Activated CD4-positive, alpha-beta T cell treated with anti-CD3 and anti-CD28 coated beads for 36 hours (primary cell): ENCODE measurements at regions of chr10 and their contacts with region 1.

Region 1: GRCh38 chr10:5446390-5446926 is 34.1 kb downstream of the NET1 start:
- DNase-seq: peak; percentile 86
- ATAC-seq: peak; percentile 71
- H3K4me3 Mint-ChIP-seq: peak overlapping the region; percentile 70
- H3K27ac Mint-ChIP-seq: peak overlapping the region; percentile 45
- H3K4me1 Mint-ChIP-seq: peaks cover 53% of the 10 kb centered on the region
- H3K27me3 Mint-ChIP-seq: no peaks in the 10 kb centered on the region

Region 2: GRCh38 chr10:4740471-4740870 is 706.0 kb before region 1 on chr10:
- CTCF ChIA-PET with region 1: no interaction called
- POLR2A ChIA-PET with region 1: no interaction called
- intact Hi-C with region 1: no loop called
- DNase-seq: no peak
- ATAC-seq: no peak
- H3K4me3 Mint-ChIP-seq: no peak overlapping the region
- H3K27ac Mint-ChIP-seq: no peak overlapping the region
- H3K4me1 Mint-ChIP-seq: no peaks in the 10 kb centered on the region
- H3K27me3 Mint-ChIP-seq: peaks cover 35% of the 10 kb centered on the region

Region 3: GRCh38 chr10:5434017-5434753 is 12.3 kb before region 1 on chr10:
- CTCF ChIA-PET with region 1: interaction called, 65 read pairs
- POLR2A ChIA-PET with region 1: no interaction called
- intact Hi-C with region 1: no loop called
- DNase-seq: no peak
- ATAC-seq: peak; percentile 57
- H3K4me3 Mint-ChIP-seq: no peak overlapping the region
- H3K27ac Mint-ChIP-seq: no peak overlapping the region
- H3K4me1 Mint-ChIP-seq: peaks cover 13% of the 10 kb centered on the region
- H3K27me3 Mint-ChIP-seq: no peaks in the 10 kb centered on the region

Region 4: GRCh38 chr10:5548527-5549223 is 102.2 kb after region 1 on chr10:
- CTCF ChIA-PET with region 1: no interaction called
- POLR2A ChIA-PET with region 1: no interaction called
- intact Hi-C with region 1: loop called (anchors 2 to 5 kb)
- DNase-seq: peak; percentile 85
- ATAC-seq: peak; percentile 95
- H3K4me3 Mint-ChIP-seq: no peak overlapping the region
- H3K27ac Mint-ChIP-seq: no peak overlapping the region
- H3K4me1 Mint-ChIP-seq: peaks cover 35% of the 10 kb centered on the region
- H3K27me3 Mint-ChIP-seq: peaks cover 2% of the 10 kb centered on the region

Region 5: GRCh38 chr10:5813287-5814109 is 367.0 kb after region 1 on chr10 and contains the start of gene GDI2:
- CTCF ChIA-PET with region 1: no interaction called
- POLR2A ChIA-PET with region 1: no interaction called
- intact Hi-C with region 1: loop called in 1 of 2 experiments (anchors 5 kb)
- DNase-seq: peak; percentile 98
- ATAC-seq: peak; percentile 94
- H3K4me3 Mint-ChIP-seq: peak within 1 kb of the TSS; percentile 92
- H3K27ac Mint-ChIP-seq: peak within 1 kb of the TSS; percentile 98
- H3K4me1 Mint-ChIP-seq: peaks cover 60% of the 10 kb centered on the region
- H3K27me3 Mint-ChIP-seq: no peaks in the 10 kb centered on the region
- total RNA-seq, gene GDI2: 276 to 290 TPM